ENCODE measurements at regions of chr2 and their contacts with region 1.

Region 1: DNA sequence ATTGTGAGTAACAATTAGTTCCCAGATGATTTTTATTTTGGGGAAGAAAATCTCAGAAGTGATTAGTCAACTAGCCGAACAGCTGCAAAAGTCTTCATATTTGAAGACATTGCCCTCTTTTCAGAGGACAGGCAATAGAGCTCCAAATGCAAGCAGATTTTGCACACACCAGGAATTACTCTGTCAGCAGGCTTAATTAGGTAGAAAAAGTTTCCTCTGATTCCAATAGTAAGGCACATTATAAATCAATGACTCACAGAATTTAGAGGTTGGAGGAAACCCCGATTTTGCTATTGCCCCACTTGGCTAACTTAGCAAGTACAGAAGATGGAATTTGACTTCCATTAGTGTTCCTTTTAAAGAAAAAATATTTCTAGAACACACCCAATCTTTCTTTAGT is 30.7 kb upstream of the SCN1A start:
- DNase-seq: no peak
- ATAC-seq: no peak
- H3K4me3 ChIP-seq: no peak overlapping the region
- H3K27ac ChIP-seq: no peak overlapping the region
- H3K4me1 ChIP-seq: peaks cover 71% of the 10 kb centered on the region
- H3K27me3 ChIP-seq: no peaks in the 10 kb centered on the region
- CTCF ChIP-seq: no peak
- EP300 ChIP-seq: no peak
- POLR2A ChIP-seq: no peak
- RAD21 ChIP-seq: no peak

Region 2: DNA sequence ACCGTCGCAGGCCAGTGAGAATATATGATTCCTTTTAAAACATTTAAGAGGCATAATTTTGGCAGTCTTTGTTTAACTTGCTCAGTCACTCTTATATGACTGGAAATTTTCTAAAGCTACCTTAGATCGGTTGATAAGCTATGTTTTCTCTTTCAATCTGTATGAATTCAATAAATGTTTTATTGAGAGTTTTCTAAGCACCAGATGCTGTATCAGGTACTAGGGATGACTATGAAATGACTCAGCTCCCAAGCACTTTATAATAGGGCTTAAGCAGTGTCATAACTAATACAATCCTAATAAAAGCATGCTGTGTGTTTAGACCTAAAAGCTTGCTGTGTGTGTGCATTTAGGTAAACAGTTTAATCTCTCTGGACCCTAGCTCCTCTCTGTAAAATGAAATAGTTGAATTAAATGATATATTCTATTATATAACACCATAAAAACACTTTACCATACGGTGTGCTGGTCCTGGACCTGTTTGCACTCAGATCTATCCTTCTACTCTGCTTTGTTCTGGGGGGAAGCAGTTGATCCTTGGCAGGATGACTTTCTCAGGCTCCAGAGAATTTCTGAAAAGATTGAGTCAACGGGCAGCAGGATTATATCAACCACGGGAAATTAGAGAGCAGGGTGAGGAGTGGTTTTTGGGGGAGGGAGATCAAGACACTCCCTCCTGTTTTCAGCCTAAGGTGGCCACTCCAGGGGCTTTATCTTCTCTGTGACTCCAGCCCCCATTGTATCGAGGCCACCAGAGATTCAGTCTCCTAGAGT is 1177.1 kb before region 1 on chr2:
- CTCF ChIA-PET with region 1: no interaction called
- POLR2A ChIA-PET with region 1: no interaction called
- in situ Hi-C with region 1: no loop called
- intact Hi-C with region 1: loop called (anchors 5 kb)
- DNase-seq: no peak
- ATAC-seq: no peak
- H3K4me3 ChIP-seq: no peak overlapping the region
- H3K27ac ChIP-seq: no peak overlapping the region
- H3K4me1 ChIP-seq: no peaks in the 10 kb centered on the region
- H3K27me3 ChIP-seq: no peaks in the 10 kb centered on the region; a peak in 2 of 5 replicates
- CTCF ChIP-seq: no peak
- EP300 ChIP-seq: no peak
- POLR2A ChIP-seq: no peak
- RAD21 ChIP-seq: no peak

Region 3: GRCh38 chr2:166067229-166067628 is 91.3 kb before region 1 on chr2:
- CTCF ChIA-PET with region 1: no interaction called
- POLR2A ChIA-PET with region 1: no interaction called
- in situ Hi-C with region 1: no loop called
- intact Hi-C with region 1: no loop called
- DNase-seq: no peak
- ATAC-seq: no peak
- H3K4me3 ChIP-seq: no peak overlapping the region
- H3K27ac ChIP-seq: no peak overlapping the region
- H3K4me1 ChIP-seq: peaks cover 9% of the 10 kb centered on the region; the same call in 1 of the 2 replicates
- H3K27me3 ChIP-seq: no peaks in the 10 kb centered on the region
- CTCF ChIP-seq: no peak
- EP300 ChIP-seq: no peak
- POLR2A ChIP-seq: no peak
- RAD21 ChIP-seq: no peak

Region 4: GRCh38 chr2:166127217-166128155 is 31.1 kb before region 1 on chr2 and contains the start of gene SCN1A:
- CTCF ChIA-PET with region 1: no interaction called
- POLR2A ChIA-PET with region 1: interaction called, 14 read pairs
- in situ Hi-C with region 1: no loop called
- intact Hi-C with region 1: no loop called
- DNase-seq: peak; percentile 89
- ATAC-seq: peak; percentile 86
- H3K4me3 ChIP-seq: peak within 1 kb of the TSS; percentile 35 to 62 (median 50)
- H3K27ac ChIP-seq: peak within 1 kb of the TSS; percentile 72
- H3K4me1 ChIP-seq: peaks cover 93% of the 10 kb centered on the region
- H3K27me3 ChIP-seq: no peaks in the 10 kb centered on the region
- CTCF ChIP-seq: peak; percentile 81
- EP300 ChIP-seq: peak in 1 of 2 experiments; percentile 76; a peak in 2 of 4 replicates
- POLR2A ChIP-seq: no peak
- RAD21 ChIP-seq: peak; percentile 62; the same call in 1 of the 2 replicates
- total RNA-seq, gene SCN1A: 19.6 and 39.4 TPM in 2 replicates

Measured in HepG2 (cell line).